T-cell (primary cell): ENCODE measurements at regions of chr15 and their contacts with region 1.

Region 1: DNA sequence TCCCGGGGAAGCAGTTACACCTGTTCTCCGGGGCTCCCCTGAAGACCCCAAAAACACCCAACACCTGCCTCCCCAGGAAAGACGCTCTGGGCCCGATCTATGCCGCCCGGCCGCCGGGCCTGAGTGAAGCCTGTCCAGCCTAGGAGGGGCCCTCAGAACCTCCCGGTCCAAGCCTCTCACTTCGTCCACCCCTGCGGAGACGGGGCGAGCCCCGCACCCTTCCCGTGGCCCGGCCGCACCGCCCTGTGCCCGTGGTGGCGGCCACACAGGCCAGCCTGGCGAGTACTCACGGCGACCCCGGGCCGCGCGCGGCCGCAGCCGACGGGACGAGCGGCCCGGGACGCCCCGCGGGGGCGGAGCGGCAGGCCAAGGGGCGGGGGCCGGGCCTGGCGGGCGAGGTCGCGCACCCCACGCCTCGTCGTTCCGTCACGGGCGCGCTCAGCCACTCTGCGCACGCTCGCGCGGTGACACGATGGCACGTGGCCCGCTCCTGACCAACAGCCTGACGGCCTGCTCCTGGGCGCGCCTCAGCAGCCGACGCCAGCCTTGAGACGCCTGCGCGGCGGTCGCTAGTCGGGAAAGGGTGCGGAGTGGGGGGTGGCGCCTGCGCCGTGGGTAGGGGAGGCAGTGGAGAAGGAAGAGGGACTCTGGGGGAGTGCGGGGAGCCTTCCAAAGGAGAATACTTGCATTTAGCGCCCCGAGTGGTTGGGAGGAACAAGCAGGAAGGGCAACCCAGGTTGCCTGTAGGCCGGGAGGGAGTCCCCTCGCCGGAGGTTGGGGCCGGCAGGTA is at the start of gene PARP6:
- DNase-seq: peak; percentile 95 to 100 (median 98)
- ATAC-seq: peak; percentile 94 to 97 (median 96)
- H3K4me3 ChIP-seq: peak within 1 kb of the TSS; percentile 74 to 82
- H3K4me3 Mint-ChIP-seq: peak within 1 kb of the TSS; percentile 83 to 89 (median 83)
- H3K27ac ChIP-seq: peak within 1 kb of the TSS; percentile 77
- H3K27ac Mint-ChIP-seq: peak within 1 kb of the TSS; percentile 93 to 95
- H3K4me1 ChIP-seq: peaks cover 17% of the 10 kb centered on the region in 2 experiments
- H3K4me1 Mint-ChIP-seq: peaks cover 41 to 49% (median 43%) of the 10 kb centered on the region in 3 donors
- H3K27me3 ChIP-seq: no peaks in the 10 kb centered on the region
- H3K27me3 Mint-ChIP-seq: no peaks in the 10 kb centered on the region
- total RNA-seq, gene PARP6: 94.4 to 132 (median 101) TPM

Region 2: GRCh38 chr15:72099155-72099554 is 173.3 kb before region 1 on chr15:
- CTCF ChIA-PET with region 1: no interaction called
- POLR2A ChIA-PET with region 1: interaction called in 1 of 2 experiments, 14 read pairs
- DNase-seq: no peak
- ATAC-seq: no peak
- H3K4me3 ChIP-seq: no peak overlapping the region
- H3K4me3 Mint-ChIP-seq: no peak overlapping the region
- H3K27ac ChIP-seq: no peak overlapping the region
- H3K27ac Mint-ChIP-seq: no peak overlapping the region
- H3K4me1 ChIP-seq: no peaks in the 10 kb centered on the region
- H3K4me1 Mint-ChIP-seq: peaks cover 10 to 18% (median 14%) of the 10 kb centered on the region in 3 donors
- H3K27me3 ChIP-seq: no peaks in the 10 kb centered on the region
- H3K27me3 Mint-ChIP-seq: no peaks in the 10 kb centered on the region

Region 3: DNA sequence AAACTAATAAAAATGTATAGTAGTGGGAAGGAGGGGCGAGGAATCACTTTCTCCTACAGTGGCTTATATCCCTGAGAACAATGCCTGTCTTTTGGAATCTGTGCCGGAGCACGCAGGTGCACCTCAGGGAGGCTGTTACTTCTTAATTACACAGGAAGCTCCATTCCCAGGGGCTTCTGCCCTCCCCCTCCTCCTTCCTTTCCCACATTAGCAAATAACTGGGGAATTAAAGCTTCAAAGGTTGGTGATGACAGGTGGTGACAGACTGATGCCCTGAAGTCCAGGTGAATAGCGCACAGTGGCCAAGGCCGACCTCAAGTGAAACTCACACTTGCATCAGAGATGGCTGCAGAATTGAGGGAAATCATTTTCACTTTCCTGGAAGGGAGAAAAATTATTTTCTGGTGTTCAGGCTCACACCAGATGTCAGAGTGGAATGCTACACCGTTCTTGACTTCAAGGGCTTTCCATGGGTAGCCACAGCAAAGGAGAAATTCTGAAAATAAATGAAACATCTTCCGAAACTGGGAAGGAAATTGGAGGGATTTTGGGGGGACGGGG is 78.5 kb before region 1 on chr15:
- CTCF ChIA-PET with region 1: no interaction called
- POLR2A ChIA-PET with region 1: no interaction called
- DNase-seq: no peak
- ATAC-seq: no peak
- H3K4me3 ChIP-seq: no peak overlapping the region
- H3K4me3 Mint-ChIP-seq: no peak overlapping the region
- H3K27ac ChIP-seq: no peak overlapping the region
- H3K27ac Mint-ChIP-seq: no peak overlapping the region
- H3K4me1 ChIP-seq: peaks cover 0 to 11% of the 10 kb centered on the region in 2 experiments
- H3K4me1 Mint-ChIP-seq: peaks cover 6 to 11% (median 6%) of the 10 kb centered on the region in 3 donors
- H3K27me3 ChIP-seq: peaks cover 0 to 37% of the 10 kb centered on the region in 2 experiments
- H3K27me3 Mint-ChIP-seq: peaks cover 21 to 27% of the 10 kb centered on the region in 2 donors

Region 4: DNA sequence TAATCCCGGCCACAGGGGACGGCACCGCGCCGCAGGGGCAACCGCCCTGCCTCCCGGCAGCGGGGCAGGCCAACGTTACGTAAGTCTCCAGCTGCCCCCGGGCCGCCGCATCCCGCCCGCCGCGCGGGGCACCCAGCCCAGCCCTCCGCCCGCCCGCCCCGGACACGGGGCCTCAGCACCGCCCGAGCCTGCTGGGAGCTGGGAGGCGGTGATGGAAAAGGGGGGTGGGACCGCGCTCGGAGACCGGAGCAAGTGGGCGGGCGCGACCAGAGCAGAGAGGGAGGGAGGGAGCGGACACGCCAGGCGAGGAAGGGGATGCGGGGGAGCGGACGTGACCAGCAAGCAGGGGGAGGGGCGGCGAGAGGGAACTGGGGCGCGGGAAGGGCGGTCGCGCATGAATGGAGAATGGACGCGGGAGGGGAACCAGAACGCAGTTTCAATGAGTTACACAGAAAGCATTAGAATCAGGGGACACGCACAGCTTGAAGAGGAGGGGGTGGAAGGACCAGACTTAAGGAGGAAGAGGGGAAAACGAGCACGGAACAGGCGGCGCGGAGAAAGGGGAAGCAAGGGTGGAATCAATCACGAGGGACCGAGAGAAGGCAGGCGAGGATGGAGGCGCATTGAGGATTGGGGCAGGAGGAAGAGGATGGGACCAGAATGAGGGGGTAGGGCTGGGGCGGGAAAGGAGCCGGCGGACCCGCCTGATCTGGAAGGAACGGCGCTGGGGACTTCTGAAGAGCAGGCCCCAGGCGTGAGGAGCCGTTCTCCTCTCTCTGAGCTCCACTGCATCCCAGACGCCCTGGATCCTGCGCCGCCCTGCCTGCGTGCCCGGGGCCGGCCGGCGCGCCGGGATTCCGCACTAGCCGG is 42.0 kb before region 1 on chr15:
- CTCF ChIA-PET with region 1: interaction called, 8 to 18 read pairs
- POLR2A ChIA-PET with region 1: interaction called in 1 of 2 experiments, 3 read pairs
- DNase-seq: peak in 28 of 35 experiments; percentile 2 to 60 (median 26)
- ATAC-seq: peak; percentile 0 to 1 (median 0)
- H3K4me3 ChIP-seq: peak overlapping the region; percentile 82 to 96
- H3K4me3 Mint-ChIP-seq: peak overlapping the region; percentile 97 to 100 (median 97)
- H3K27ac ChIP-seq: peak overlapping the region; percentile 79
- H3K27ac Mint-ChIP-seq: peak overlapping the region; percentile 94 to 96
- H3K4me1 ChIP-seq: peaks cover 29 to 61% of the 10 kb centered on the region in 2 experiments
- H3K4me1 Mint-ChIP-seq: peaks cover 53 to 61% (median 59%) of the 10 kb centered on the region in 3 donors
- H3K27me3 ChIP-seq: no peaks in the 10 kb centered on the region
- H3K27me3 Mint-ChIP-seq: no peaks in the 10 kb centered on the region

Region 5: DNA sequence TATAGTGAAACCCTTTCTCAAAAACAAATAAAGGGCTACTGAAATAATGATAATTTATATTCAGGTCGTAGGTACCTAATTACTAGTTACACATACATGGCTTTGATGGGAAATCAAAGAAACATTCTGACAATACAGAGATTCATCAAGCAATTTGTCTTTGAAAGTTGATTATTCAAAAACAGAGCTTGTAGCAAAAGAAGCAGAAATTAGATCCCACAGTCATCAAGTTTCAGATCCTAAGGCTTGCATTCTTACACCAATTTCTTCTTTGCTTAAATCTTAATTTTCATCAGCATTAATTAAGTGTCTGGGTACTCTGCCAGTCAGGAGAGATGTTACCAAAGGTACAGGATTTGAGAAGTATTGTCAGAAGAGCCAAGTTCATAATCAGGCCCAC is 104.9 kb after region 1 on chr15:
- CTCF ChIA-PET with region 1: interaction called in 1 of 2 experiments, 12 read pairs
- POLR2A ChIA-PET with region 1: no interaction called
- DNase-seq: no peak
- ATAC-seq: no peak
- H3K4me3 ChIP-seq: no peak overlapping the region
- H3K4me3 Mint-ChIP-seq: no peak overlapping the region
- H3K27ac ChIP-seq: peak overlapping the region; percentile 77
- H3K27ac Mint-ChIP-seq: peak overlapping the region; percentile 65 to 76
- H3K4me1 ChIP-seq: peaks cover 15 to 20% of the 10 kb centered on the region in 2 experiments
- H3K4me1 Mint-ChIP-seq: peaks cover 48 to 59% (median 56%) of the 10 kb centered on the region in 3 donors
- H3K27me3 ChIP-seq: no peaks in the 10 kb centered on the region
- H3K27me3 Mint-ChIP-seq: no peaks in the 10 kb centered on the region

Region 6: GRCh38 chr15:72445426-72445825 is 173.0 kb after region 1 on chr15:
- CTCF ChIA-PET with region 1: no interaction called
- POLR2A ChIA-PET with region 1: no interaction called
- DNase-seq: no peak
- ATAC-seq: no peak
- H3K4me3 ChIP-seq: no peak overlapping the region
- H3K4me3 Mint-ChIP-seq: no peak overlapping the region
- H3K27ac ChIP-seq: no peak overlapping the region
- H3K27ac Mint-ChIP-seq: no peak overlapping the region
- H3K4me1 ChIP-seq: no peaks in the 10 kb centered on the region
- H3K4me1 Mint-ChIP-seq: no peaks in the 10 kb centered on the region
- H3K27me3 ChIP-seq: peaks cover 0 to 9% of the 10 kb centered on the region in 2 experiments
- H3K27me3 Mint-ChIP-seq: peaks cover 9 to 13% of the 10 kb centered on the region in 2 donors